Activated CD4-positive, alpha-beta T cell treated with anti-CD3 and anti-CD28 coated beads for 36 hours (primary cell): ENCODE measurements at regions of chr13 and their contacts with region 1.

Region 1: DNA sequence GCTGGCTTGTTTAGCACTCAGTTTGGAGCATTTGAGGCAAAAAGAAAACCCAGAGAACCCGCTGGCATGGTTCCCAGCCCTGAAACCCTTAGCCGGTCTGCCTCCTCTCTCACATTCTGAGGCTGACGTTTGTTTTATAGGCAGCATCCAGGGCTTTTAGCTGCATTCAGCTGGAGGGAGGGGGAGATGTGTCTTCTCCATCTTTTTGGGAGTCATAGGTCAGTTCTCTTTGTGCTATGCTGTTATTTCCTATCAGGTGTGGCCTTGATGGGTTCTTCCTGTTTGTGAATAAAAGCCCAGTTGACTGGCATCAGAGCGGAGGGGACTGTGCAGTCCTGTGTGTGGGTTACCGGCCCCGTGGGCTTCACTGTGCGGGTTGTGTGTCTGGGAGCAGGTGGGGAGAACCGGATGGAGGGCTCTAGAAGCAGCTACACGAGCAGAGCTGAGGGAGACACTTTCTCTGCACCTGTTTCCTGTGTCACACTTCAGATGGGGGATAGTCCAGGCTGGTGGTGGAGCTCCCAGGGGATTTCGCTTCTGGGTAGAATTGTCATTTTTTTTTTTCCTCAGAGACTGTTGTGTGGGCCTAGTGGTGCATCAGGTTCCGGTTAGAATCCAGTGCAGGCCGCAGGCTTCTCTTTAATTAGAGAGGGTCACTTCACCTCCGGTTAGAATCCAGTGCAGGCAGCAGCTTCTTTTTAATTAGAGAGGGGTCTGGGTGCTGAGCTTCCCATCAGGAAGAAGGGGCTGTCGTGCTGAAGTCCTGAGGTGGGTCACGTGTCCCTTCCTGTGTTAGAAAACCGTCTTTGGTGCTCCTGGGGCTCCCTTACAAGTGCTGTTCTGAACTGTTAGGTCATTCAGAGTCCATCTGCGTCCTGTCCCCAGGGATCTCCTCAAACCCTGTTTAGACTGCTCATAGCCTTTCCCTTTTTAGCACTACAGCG is 69.6 kb downstream of the ARHGEF7 start:
- DNase-seq: peak; percentile 55
- ATAC-seq: peak; percentile 69
- H3K4me3 Mint-ChIP-seq: peak overlapping the region; percentile 53
- H3K27ac Mint-ChIP-seq: peak overlapping the region; percentile 83
- H3K4me1 Mint-ChIP-seq: peaks cover 95% of the 10 kb centered on the region
- H3K27me3 Mint-ChIP-seq: no peaks in the 10 kb centered on the region

Region 2: DNA sequence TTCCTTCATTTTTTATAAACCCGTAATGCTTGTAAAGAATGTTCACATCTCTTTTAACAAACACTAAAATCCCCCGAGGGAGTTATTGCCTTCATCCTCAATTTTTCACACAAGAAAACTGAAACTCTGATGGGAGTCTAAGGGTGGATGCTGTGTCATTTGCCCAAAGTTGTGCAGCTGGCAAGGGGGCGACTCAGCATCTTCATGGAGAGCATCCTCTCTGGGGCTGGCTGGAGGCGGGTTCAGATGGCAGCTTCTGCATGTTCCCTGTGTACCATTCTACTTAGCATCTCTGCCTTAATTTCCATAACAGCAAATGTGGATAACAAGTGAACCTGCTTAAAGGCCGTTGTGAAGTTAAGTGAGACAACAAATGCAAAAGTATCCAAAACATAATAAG is 1654.8 kb before region 1 on chr13:
- CTCF ChIA-PET with region 1: no interaction called
- POLR2A ChIA-PET with region 1: no interaction called
- intact Hi-C with region 1: no loop called
- DNase-seq: no peak
- ATAC-seq: no peak
- H3K4me3 Mint-ChIP-seq: no peak overlapping the region
- H3K27ac Mint-ChIP-seq: no peak overlapping the region
- H3K4me1 Mint-ChIP-seq: no peaks in the 10 kb centered on the region
- H3K27me3 Mint-ChIP-seq: peaks cover 9% of the 10 kb centered on the region

Region 3: GRCh38 chr13:111006506-111007031 is 178.2 kb before region 1 on chr13:
- CTCF ChIA-PET with region 1: no interaction called
- POLR2A ChIA-PET with region 1: no interaction called
- intact Hi-C with region 1: no loop called
- DNase-seq: no peak
- ATAC-seq: no peak
- H3K4me3 Mint-ChIP-seq: no peak overlapping the region
- H3K27ac Mint-ChIP-seq: no peak overlapping the region
- H3K4me1 Mint-ChIP-seq: no peaks in the 10 kb centered on the region
- H3K27me3 Mint-ChIP-seq: peaks cover 11% of the 10 kb centered on the region

Region 4: GRCh38 chr13:111202745-111203144 is 18.0 kb after region 1 on chr13:
- CTCF ChIA-PET with region 1: interaction called, 4 read pairs
- POLR2A ChIA-PET with region 1: interaction called, 4 read pairs
- intact Hi-C with region 1: loop called (anchors 1 kb)
- DNase-seq: peak; percentile 43
- ATAC-seq: peak; percentile 89
- H3K4me3 Mint-ChIP-seq: no peak overlapping the region
- H3K27ac Mint-ChIP-seq: peak overlapping the region; percentile 70
- H3K4me1 Mint-ChIP-seq: peaks cover 60% of the 10 kb centered on the region
- H3K27me3 Mint-ChIP-seq: no peaks in the 10 kb centered on the region

Region 5: DNA sequence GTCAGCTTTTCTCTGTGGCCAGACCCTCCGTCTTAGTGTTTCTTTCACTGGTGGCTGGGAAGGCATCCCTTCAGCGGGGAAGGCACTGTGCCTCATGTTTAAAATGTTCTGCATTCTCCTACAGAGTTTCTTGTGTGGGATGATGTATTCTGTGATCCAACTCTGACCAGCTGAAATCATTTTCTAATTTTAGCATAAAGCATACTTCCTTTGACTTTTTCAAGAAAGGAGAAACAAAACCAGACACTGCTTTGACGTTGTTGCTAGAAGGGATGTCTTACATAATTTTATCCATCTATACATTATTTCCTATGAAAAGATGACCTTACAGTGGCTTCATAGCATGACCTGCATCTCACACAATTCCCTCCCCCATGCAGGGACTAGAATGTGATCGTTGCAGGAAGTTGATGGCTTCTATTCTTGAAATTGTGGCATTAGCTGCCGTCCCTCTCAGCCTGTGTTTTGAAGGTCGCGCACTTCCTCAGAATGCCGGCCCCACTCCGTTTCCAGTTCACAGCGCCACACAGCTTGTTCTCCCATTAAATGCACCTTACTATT is 97.1 kb after region 1 on chr13:
- CTCF ChIA-PET with region 1: no interaction called
- POLR2A ChIA-PET with region 1: no interaction called
- intact Hi-C with region 1: no loop called
- DNase-seq: no peak
- ATAC-seq: no peak
- H3K4me3 Mint-ChIP-seq: no peak overlapping the region
- H3K27ac Mint-ChIP-seq: no peak overlapping the region
- H3K4me1 Mint-ChIP-seq: no peaks in the 10 kb centered on the region
- H3K27me3 Mint-ChIP-seq: no peaks in the 10 kb centered on the region